ENCODE measurements at regions of chr10 and their contacts with region 1.

Region 1: GRCh38 chr10:110225756-110226542 is 18.5 kb downstream of the MXI1 start:
- DNase-seq: peak; percentile 92
- H3K4me3 Mint-ChIP-seq: peak overlapping the region; percentile 98
- H3K27ac Mint-ChIP-seq: peak overlapping the region; percentile 96
- H3K4me1 Mint-ChIP-seq: peaks cover 41% of the 10 kb centered on the region
- H3K27me3 Mint-ChIP-seq: no peaks in the 10 kb centered on the region

Region 2: DNA sequence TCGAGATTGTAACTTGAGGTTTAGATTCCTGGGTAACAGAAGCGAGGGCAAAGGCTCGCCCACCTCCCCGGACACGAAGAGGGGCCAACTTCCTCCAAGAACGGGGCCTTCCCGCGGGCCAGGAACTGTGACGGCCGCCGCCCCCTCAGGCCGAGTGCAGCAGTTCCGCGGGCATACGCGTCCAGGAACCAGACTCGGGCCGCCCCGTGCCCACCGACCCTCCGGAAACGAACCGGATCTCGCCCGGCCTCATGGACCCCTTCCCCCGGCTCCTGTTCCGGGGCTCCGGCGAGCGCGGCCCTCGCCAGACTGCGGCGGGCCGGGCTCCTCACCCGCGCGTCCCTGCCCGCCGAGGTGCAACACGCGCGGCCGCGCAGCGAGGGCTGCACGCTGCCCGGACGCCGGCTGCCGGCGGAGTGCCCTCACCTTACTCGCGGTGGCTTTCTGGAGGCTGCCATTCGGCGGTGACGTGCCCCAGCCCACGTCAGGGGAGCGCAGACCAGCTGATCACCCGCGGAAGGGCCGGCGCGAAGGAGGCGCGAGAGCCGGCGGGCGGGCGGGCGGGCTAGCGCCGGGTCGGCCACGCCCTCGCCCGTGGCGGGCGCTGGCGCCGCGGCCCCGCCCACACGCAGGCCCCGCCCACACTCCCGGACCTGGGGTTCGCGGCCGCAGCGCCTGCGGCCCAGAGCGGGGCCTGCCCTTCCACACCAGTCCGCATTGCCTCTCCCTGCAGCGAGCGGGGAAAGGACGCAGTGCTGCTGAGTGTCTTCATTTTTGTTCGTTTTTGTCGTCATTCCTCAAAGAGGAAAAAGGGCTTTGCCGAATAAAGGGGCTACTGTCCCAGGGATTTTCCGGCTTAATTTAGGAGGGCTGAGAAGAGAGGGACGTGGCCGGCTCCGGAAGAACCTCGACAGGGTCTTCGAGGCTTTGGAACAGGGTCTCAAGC is 302.7 kb before region 1 on chr10 and contains the start of gene XPNPEP1:
- CTCF ChIA-PET with region 1: no interaction called
- POLR2A ChIA-PET with region 1: no interaction called
- intact Hi-C with region 1: loop called (anchors 5 kb)
- DNase-seq: peak; percentile 90
- H3K4me3 Mint-ChIP-seq: peak within 1 kb of the TSS; percentile 90
- H3K27ac Mint-ChIP-seq: peak within 1 kb of the TSS; percentile 93
- H3K4me1 Mint-ChIP-seq: peaks cover 56% of the 10 kb centered on the region
- H3K27me3 Mint-ChIP-seq: no peaks in the 10 kb centered on the region
- total RNA-seq, gene XPNPEP1: 66.4 to 66.6 TPM

Region 3: DNA sequence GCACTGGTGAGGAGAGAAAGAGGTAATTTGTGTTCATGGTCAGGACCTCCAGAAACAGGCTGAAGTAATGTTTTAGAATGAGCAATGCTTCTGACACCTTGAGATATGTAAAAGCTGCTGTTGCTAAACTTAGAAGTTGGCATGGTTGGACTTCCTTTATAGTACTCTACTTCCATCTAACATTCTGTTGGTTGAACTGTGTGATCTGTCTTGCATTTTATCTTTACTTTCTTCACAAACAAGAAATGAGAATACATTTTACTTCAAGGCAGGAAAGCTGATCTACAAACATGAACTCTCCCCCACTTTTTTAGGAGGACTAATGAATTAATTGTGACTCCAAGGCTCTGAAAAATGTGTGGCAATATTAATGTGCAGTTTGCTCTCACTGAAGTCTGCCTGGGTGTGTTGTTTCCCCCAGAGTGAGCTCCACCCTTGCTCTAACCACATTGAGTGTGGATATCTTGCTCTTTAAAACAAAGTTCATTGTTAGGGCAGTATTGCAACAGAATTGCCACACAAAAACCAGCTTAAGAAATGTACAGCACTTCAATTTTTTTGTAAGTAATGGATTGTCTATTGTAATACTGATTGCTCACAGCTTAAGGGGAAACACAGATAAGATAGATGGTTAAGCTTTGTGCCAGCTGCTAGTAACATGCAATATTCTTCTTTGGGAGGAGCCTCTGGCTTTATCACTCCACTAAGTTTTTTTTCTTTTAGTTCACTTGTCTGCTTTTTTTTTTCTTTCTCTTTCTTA is 149.2 kb before region 1 on chr10:
- CTCF ChIA-PET with region 1: no interaction called
- POLR2A ChIA-PET with region 1: no interaction called
- intact Hi-C with region 1: loop called (anchors 5 kb)
- DNase-seq: no peak
- H3K4me3 Mint-ChIP-seq: peak overlapping the region; percentile 81
- H3K27ac Mint-ChIP-seq: peak overlapping the region; percentile 98
- H3K4me1 Mint-ChIP-seq: peaks cover 84% of the 10 kb centered on the region
- H3K27me3 Mint-ChIP-seq: no peaks in the 10 kb centered on the region

Region 4: GRCh38 chr10:110279407-110279986 is 53.5 kb after region 1 on chr10:
- CTCF ChIA-PET with region 1: interaction called, 8 read pairs
- POLR2A ChIA-PET with region 1: no interaction called
- intact Hi-C with region 1: loop called (anchors 2 kb)
- DNase-seq: peak; percentile 54
- H3K4me3 Mint-ChIP-seq: no peak overlapping the region
- H3K27ac Mint-ChIP-seq: no peak overlapping the region
- H3K4me1 Mint-ChIP-seq: peaks cover 19% of the 10 kb centered on the region
- H3K27me3 Mint-ChIP-seq: no peaks in the 10 kb centered on the region

Region 5: DNA sequence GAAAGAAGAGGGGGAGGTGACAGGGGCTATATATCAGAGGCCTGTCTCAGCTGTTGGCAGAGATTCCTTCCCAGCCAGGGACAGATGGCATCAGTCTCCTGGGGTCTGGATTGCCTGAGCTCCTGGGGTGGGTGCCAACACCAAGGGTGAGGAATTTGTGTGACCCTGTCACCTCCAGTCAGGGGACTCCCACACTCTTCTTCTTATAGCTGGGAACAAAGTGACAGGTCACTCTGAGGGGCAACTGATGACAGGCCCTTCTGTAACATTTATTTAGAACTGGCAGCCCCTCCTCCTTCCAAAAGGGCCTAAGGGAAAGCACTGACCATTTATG is 218.0 kb after region 1 on chr10:
- CTCF ChIA-PET with region 1: no interaction called
- POLR2A ChIA-PET with region 1: no interaction called
- intact Hi-C with region 1: no loop called
- DNase-seq: peak; percentile 3
- H3K4me3 Mint-ChIP-seq: no peak overlapping the region
- H3K27ac Mint-ChIP-seq: no peak overlapping the region
- H3K4me1 Mint-ChIP-seq: peaks cover 9% of the 10 kb centered on the region
- H3K27me3 Mint-ChIP-seq: no peaks in the 10 kb centered on the region

Region 6: GRCh38 chr10:110567201-110568054 is 341.5 kb after region 1 on chr10 and contains the start of gene SMC3:
- CTCF ChIA-PET with region 1: no interaction called
- POLR2A ChIA-PET with region 1: no interaction called
- intact Hi-C with region 1: loop called (anchors 1 kb)
- DNase-seq: peak; percentile 94
- H3K4me3 Mint-ChIP-seq: peak within 1 kb of the TSS; percentile 93
- H3K27ac Mint-ChIP-seq: peak within 1 kb of the TSS; percentile 97
- H3K4me1 Mint-ChIP-seq: peaks cover 43% of the 10 kb centered on the region
- H3K27me3 Mint-ChIP-seq: peaks cover 10% of the 10 kb centered on the region
- total RNA-seq, gene SMC3: 89.5 to 92.2 TPM